Mucosa of descending colon (tissue), 3 donors: ENCODE measurements at regions of chr20 and their contacts with region 1.

Region 1: GRCh38 chr20:47785854-47786764 is 828 bp upstream of the SULF2 start:
- DNase-seq: peak; percentile 69 to 76 (median 76)
- ATAC-seq: peak; percentile 72
- H3K4me3 ChIP-seq: peak overlapping the region; percentile 11
- H3K4me1 ChIP-seq: peaks cover 9% of the 10 kb centered on the region
- CTCF ChIP-seq: peak; percentile 28

Region 2: DNA sequence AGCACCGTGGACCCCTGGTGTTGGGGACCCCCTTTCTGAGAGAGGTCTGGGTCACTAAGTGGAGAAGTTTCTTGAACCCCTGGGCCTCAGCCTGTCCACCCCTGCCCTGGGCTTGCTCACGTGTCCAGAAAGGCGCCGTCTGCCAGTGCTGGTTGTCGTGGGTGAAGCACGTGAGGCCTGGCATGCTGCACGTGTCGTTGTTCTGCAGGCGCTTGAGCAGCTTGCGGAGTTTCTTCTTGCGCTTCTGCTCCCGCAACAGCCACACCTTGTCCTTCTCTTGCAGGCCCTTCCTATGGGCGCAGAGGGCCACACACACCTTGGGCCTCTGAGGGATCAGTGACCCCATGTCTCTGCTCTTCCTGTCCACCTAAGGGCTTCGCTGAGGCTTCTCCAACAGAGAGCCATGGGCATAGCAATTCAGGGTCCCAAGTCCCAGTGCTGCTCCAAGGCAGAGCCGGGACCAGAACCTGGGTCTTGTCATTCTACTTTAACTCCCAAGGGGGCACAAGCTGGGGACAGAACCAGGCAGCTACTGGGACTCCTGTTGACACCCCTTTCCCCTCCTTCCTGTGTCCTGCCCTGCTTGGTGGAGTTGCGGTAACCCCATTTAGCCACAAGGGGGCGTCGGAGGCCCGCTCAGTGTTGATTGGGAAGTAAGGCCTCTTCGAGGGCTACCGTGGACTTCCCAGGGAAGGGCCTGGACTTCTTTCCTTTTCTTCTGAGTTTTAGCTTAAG is 122.6 kb before region 1 on chr20:
- intact Hi-C with region 1: loop called in 1 of 2 experiments (anchors 10 kb)
- DNase-seq: peak; percentile 75 to 85 (median 78)
- ATAC-seq: peak; percentile 91
- H3K4me3 ChIP-seq: no peak overlapping the region
- H3K4me1 ChIP-seq: no peaks in the 10 kb centered on the region
- CTCF ChIP-seq: peak; percentile 95

Region 3: DNA sequence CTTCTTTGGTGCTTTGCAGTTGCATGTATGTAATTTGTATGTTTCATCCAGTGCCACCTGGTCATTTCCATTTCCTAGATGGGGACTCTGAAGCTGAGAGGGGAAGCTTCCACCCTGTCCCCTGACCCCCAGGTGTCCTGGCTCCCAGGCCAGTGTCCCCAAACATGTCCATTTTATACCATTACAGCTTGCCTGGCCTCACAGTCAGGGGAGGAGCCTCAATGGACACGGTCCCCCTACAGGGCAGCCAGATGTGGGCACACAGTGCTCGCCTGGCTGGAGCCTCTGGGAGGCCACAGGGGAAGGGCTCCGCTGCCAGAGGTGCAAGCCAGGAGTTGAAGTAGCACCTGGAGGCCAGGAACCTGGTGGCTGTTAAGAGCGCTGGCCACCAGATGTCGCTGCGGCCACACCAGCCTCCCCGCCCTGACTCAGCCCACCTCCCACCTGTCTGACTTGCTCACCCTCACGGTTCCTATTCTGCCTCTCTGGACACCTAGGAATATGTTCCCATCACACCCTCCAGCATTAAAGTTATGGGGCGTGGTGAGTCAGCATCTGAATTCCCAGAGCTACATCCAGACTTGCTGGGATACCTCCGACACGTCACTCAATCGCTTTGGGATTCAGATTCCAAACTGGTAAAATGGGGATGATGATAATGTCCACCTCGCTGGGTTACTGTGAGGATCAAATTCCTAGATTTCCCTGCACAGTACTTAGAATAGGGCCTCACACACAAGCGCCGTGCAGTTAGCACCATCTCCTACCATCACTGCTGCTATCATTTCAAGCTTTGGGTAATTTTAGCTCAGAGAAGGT is 108.3 kb before region 1 on chr20:
- intact Hi-C with region 1: no loop called
- DNase-seq: peak in 2 of 3 donors; percentile 55 to 61
- ATAC-seq: peak; percentile 68
- H3K4me3 ChIP-seq: no peak overlapping the region
- H3K4me1 ChIP-seq: no peaks in the 10 kb centered on the region
- CTCF ChIP-seq: peak; percentile 57

Region 4: DNA sequence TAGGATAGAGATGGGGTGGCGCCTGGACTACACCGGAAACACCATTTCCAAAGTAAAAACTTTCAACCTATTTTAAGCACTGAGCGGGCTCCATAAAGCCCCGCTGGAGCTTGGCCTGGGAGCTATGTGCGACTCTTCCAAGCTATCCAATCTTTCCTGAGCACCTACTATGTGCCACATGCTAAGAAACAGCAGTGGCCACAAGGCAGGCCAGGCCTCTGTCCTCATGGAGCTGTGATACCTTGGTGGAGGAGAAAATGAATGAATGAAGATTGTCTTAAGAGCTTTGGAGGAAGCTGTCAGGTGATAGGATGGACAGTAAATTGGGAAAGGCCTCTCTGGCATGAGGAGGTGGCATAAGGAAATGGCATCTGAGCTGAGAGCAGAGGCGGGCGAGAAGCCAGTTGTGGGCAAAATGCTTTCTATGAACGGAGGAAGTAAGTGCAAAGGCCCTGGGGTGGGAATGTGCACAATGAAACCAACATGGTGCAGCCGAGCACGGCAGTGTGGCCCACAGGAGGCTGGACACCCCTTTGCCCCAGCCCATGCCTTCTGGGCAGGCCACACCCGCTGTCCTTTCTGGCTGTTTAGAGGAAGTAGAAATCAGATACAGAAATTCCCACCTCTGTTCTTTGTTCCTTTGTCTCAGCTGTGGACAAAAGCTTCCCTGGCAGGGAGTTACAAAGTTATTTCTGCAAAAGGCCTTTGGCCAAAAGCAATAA is 13.0 kb before region 1 on chr20:
- intact Hi-C with region 1: loop called in 1 of 2 experiments (anchors 1 kb)
- DNase-seq: peak; percentile 71 to 83 (median 71)
- ATAC-seq: peak; percentile 82
- H3K4me3 ChIP-seq: no peak overlapping the region
- H3K4me1 ChIP-seq: peaks cover 37% of the 10 kb centered on the region
- CTCF ChIP-seq: no peak

Region 5: DNA sequence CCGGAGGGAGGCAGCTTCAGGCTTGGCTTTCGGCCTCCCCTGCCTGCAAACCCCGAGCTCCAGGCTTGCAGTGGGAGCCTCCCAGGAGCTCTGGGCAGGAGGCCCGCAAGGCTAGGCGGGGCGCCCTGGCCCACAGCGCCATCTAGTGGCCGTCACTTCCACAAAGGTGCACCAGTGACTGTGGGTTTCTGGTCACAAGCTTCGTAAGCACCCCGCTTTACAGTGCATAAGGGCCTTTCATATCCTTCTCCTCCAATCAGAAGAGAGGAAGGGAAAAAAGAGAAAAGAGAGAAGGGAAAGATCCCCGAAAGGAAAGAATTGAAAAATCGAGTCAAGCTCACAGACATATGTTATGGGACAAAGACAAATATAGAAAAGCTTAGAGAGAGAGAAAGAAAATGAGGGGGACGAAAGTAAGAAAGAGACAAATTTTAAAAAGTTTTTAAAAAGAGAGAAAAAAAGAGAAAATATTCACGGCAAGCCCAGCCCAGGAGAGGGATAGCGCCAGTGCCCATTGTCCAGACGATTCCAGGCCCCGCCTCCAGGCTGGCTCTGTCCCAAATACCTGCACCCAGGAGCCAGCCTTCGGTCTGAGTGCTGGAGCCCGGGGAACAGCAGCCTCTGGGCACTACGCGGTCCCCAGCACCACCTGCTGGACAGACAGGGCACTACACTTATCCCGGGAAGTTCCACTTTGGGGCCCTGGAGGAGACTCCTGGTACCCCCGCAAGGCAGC is 834.6 kb after region 1 on chr20:
- intact Hi-C with region 1: loop called in 1 of 2 experiments (anchors 5 kb)
- DNase-seq: peak; percentile 90 to 94 (median 93)
- ATAC-seq: peak; percentile 95
- H3K4me3 ChIP-seq: no peak overlapping the region
- H3K4me1 ChIP-seq: peaks cover 20% of the 10 kb centered on the region
- CTCF ChIP-seq: peak; percentile 87